ENCODE measurements at regions of chr5 and their contacts with region 1.

Region 1: DNA sequence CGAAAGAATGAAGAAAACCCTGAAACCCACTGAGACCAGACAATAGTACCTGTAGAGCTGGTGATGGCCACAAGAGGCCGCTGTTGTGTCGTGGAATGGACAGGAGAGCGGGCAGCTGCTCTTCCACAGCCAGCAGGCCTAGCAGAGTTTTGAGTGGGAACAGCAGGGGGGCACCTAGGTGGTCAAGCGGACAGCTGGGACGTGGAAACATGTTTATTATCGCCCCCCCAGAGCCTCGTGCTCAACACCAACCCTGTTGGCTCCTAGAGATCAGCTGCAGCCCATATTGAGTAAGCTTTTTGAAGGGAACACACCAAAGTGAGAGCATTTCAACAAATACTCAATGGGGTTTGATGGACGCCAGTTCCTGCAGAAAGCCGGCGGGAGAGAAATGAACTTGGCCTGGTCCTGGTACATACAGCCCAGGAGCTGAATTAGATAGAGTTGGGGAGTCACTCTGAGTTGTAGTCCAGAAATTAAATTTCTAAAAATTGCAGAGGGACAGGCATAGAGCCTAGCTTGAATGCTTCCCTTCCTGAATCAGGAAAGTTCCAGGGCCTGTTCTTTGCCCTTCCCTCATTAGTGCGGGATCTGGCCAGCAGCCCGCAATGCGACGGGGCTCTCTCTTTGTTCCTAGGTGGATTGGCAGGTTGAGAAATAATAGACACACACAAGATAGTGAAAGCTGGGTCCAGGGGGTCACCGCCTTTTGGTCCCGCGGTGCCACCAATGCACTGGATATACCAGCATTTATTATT is 33.8 kb downstream of the MFAP3 start:
- DNase-seq: peak; percentile 82 to 91
- ATAC-seq: peak; percentile 90 to 92 (median 90)
- H3K4me3 ChIP-seq: no peak overlapping the region
- H3K4me3 Mint-ChIP-seq: no peak overlapping the region
- H3K27ac ChIP-seq: no peak overlapping the region
- H3K27ac Mint-ChIP-seq: peak overlapping the region; percentile 64 to 72
- H3K4me1 ChIP-seq: peaks cover 16% of the 10 kb centered on the region
- H3K4me1 Mint-ChIP-seq: peaks cover 16 to 30% of the 10 kb centered on the region in 2 donors
- H3K27me3 ChIP-seq: no peaks in the 10 kb centered on the region
- H3K27me3 Mint-ChIP-seq: no peaks in the 10 kb centered on the region
- CTCF ChIP-seq: peak; percentile 92

Region 2: GRCh38 chr5:154179846-154180710 is 107.5 kb after region 1 on chr5:
- intact Hi-C with region 1: loop called (anchors 1 kb)
- DNase-seq: peak in 1 of 2 donors; percentile 74
- ATAC-seq: peak; percentile 84 to 99 (median 98)
- H3K4me3 ChIP-seq: no peak overlapping the region
- H3K4me3 Mint-ChIP-seq: no peak overlapping the region
- H3K27ac ChIP-seq: no peak overlapping the region
- H3K27ac Mint-ChIP-seq: no peak overlapping the region
- H3K4me1 ChIP-seq: no peaks in the 10 kb centered on the region
- H3K4me1 Mint-ChIP-seq: peaks cover 0 to 10% of the 10 kb centered on the region in 2 donors
- H3K27me3 ChIP-seq: no peaks in the 10 kb centered on the region
- H3K27me3 Mint-ChIP-seq: peaks cover 0 to 11% of the 10 kb centered on the region in 2 donors
- CTCF ChIP-seq: peak; percentile 78

Region 3: DNA sequence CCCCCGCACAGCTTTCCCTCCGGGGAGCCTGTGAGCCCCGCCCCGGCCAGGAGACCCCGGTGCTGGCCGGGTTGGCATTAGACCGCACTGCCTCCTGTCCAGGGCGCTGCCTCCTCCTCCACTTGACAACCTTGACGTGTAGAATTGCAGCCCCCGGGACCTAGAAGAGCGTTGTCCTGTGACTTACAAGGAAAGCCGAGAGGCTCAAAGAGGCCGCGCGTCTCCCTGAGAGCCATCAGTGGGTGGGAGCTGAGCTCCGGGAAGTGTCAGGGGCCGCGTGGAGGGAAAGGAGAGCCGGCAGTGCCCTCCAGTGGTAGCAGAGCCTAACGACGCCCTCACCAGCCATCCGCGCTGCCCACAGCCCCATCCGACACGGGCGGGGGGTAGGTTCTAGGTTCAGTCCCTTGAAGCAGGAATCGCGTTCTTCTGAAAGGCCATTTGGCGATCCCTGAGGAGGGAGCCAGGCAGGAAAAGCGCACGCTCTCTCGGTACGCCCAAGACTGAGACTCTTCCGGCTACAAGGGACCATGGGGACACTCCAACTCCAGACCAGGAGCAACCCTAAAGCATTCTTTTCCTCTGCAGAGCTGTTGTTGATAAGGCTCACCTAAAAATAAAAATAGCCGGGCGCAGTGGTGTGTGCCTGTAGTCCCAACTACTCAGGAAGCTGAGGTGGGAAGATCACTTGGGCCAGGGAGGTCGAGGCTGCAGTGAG is 332.6 kb after region 1 on chr5:
- intact Hi-C with region 1: loop called (anchors 1 kb)
- DNase-seq: peak; percentile 68 to 83
- ATAC-seq: peak; percentile 93 to 100 (median 99)
- H3K4me3 ChIP-seq: no peak overlapping the region
- H3K4me3 Mint-ChIP-seq: peak overlapping the region; percentile 32
- H3K27ac ChIP-seq: no peak overlapping the region
- H3K27ac Mint-ChIP-seq: peak overlapping the region; percentile 45 to 78
- H3K4me1 ChIP-seq: peaks cover 9% of the 10 kb centered on the region
- H3K4me1 Mint-ChIP-seq: peaks cover 13 to 25% of the 10 kb centered on the region in 2 donors
- H3K27me3 ChIP-seq: no peaks in the 10 kb centered on the region
- H3K27me3 Mint-ChIP-seq: no peaks in the 10 kb centered on the region
- CTCF ChIP-seq: peak; percentile 85

Measured in natural killer cell (primary cell).